Cardiac septum (tissue), 1 donor: ENCODE measurements at regions of chr7 and their contacts with region 1.

Region 1: GRCh38 chr7:98753989-98754479 is 115.8 kb downstream of the TMEM130 start:
- DNase-seq: no peak

Region 2: GRCh38 chr7:98698976-98699375 is 55.1 kb before region 1 on chr7:
- intact Hi-C with region 1: no loop called
- DNase-seq: no peak

Region 3: DNA sequence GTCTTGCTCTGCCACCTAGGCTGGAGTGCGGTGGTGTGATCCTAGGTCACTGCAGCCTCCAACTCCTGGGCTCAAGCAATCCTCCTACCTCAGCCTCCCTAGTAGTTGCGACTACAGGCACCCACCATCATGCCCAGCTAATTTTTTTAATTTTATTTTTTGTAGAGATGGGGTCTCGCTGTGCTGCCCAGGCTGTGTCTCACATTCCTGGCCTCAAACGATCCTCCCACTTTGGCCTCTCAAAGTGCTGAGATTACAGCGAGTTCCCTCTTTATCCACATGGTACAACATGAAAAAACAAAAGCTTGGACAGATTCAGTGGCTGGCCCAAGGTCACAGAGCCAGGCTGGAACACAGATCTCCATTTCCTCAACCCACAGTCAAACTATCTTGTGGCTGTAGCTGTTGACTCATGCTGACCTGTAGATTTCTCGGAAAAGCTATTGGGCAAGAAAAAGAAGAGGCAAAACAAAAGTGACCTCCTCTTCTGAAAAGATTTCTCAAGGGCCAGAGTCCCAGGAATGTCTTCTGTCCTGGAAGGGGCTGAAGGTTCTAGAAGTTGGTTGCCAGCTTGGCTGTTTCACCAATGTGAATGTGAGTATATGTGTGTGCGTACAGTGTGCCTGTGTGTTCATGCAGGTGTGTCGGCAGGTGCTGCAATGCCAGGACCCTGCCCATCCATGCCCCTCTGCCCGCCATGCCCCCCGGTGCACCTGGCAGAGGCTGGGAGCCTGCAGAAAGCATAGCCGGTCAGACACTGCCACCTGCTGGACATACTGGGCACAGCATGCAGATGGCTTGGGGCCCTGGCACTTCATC is 87.4 kb after region 1 on chr7:
- intact Hi-C with region 1: loop called (anchors 2 kb)
- DNase-seq: peak; percentile 83